H1 (cell line): ENCODE measurements at regions of chr16 and their contacts with region 1.

Region 1: DNA sequence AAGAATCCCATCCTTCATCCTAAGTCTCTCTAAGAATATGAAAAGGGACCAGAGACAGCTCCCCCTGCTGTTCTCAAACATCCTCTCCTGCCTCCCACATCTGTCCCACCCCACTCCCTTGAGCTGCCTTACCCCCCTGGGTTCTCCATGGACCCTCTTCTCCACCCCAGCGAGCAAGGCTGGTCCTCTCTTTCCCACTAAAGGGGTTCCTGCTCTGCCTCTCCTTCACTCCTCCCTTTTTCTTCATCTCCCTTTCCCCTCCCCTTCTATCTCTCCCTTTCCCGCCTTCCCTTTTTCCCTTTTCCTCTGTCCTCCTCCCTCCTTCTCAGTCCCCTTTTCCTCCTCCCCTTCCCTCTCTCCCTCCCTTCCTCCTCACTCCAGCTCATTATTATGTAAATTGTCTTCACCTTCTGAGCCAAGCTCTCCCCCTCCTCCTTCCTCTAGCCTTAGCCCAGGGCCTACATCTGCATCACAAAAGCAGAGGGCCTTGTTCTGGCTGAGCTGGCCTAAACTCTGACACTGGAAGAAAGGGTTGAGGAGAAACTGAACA is 90.0 kb downstream of the GNAO1 start:
- DNase-seq: peak; percentile 68 to 91
- H3K4me3 ChIP-seq: peak overlapping the region in 1 of 4 experiments; percentile 44; a peak in 3 of 8 replicates
- H3K27ac ChIP-seq: no peak overlapping the region
- H3K4me1 ChIP-seq: peaks cover 0 to 41% (median 32%) of the 10 kb centered on the region in 4 experiments; a peak in 6 of 7 replicates
- H3K27me3 ChIP-seq: no peaks in the 10 kb centered on the region
- CTCF ChIP-seq: peak in 2 of 3 experiments; percentile 34 to 64; a peak in 3 of 4 replicates
- EP300 ChIP-seq: peak in 1 of 2 experiments; percentile 83; a peak in 1 of 3 replicates
- POLR2A ChIP-seq: no peak
- RAD21 ChIP-seq: peak in 1 of 2 experiments; percentile 10; a peak in 2 of 4 replicates

Region 2: DNA sequence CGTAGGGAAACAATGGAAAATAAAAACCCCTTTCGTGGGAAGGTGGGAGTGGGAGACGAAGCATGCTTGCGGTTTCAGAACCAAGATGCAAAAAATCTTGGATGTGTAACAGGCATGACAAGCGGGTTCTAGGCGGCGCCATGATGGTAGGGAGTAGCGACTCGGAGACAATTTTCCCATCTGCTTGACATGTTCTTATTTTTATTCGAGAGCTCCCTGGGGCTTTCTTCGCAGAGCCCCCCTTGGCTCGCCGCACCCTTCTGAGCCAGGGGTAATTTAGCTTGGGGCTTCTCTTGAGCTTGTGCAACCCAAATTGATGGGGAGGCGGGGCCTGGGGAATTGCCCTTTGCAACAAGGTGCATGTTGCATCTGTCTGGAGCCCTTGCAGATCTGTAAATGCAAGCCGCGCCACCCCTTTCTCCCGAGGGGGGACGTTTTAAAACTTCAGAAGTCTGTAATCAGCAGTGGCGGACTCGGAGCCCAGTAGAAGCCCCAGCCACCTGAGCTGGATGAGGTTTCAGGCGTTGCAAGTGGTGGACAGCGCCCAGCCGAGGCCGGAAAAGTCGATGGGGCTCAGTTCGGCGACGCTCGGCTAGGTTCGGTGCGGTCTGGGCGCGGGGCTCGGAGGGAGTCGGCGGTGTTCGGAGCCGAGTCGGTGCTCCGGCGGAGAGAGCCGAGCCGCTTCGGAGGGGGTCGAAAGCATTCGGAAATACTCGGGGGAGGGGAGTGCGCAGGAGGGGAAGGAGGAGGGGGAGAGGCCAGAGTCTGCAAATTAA is 87.2 kb before region 1 on chr16:
- CTCF ChIA-PET with region 1: interaction called, 11 read pairs
- POLR2A ChIA-PET with region 1: no interaction called
- DNase-seq: peak; percentile 81 to 99
- H3K4me3 ChIP-seq: peak overlapping the region; percentile 28 to 85 (median 44); a peak in 7 of 8 replicates
- H3K27ac ChIP-seq: no peak overlapping the region
- H3K4me1 ChIP-seq: peaks cover 17 to 29% (median 23%) of the 10 kb centered on the region in 4 experiments
- H3K27me3 ChIP-seq: peaks cover 0 to 26% (median 16%) of the 10 kb centered on the region in 4 experiments; a peak in 6 of 7 replicates
- CTCF ChIP-seq: no peak
- EP300 ChIP-seq: peak in 1 of 2 experiments; percentile 24; a peak in 1 of 3 replicates
- POLR2A ChIP-seq: no peak
- RAD21 ChIP-seq: 0 out of 4 replicates have a peak, but pooled peaks of 1 of the 2 experiments have one; percentile 15

Region 3: GRCh38 chr16:56262148-56262547 is 19.2 kb before region 1 on chr16:
- CTCF ChIA-PET with region 1: interaction called, 70 read pairs
- POLR2A ChIA-PET with region 1: interaction called, 4 read pairs
- DNase-seq: no peak
- H3K4me3 ChIP-seq: no peak overlapping the region
- H3K27ac ChIP-seq: no peak overlapping the region
- H3K4me1 ChIP-seq: peaks cover 0 to 3% (median 0%) of the 10 kb centered on the region in 4 experiments; a peak in 3 of 7 replicates
- H3K27me3 ChIP-seq: no peaks in the 10 kb centered on the region
- CTCF ChIP-seq: no peak
- EP300 ChIP-seq: no peak
- POLR2A ChIP-seq: no peak
- RAD21 ChIP-seq: no peak

Region 4: GRCh38 chr16:56269811-56270684 is 11.3 kb before region 1 on chr16:
- CTCF ChIA-PET with region 1: interaction called, 70 read pairs
- POLR2A ChIA-PET with region 1: interaction called, 7 read pairs
- DNase-seq: peak in 1 of 2 experiments; percentile 29
- H3K4me3 ChIP-seq: no peak overlapping the region
- H3K27ac ChIP-seq: 0 out of 2 replicates have a peak overlapping the region, but pooled peaks have one; percentile 38
- H3K4me1 ChIP-seq: peaks cover 0 to 9% (median 3%) of the 10 kb centered on the region in 4 experiments; a peak in 4 of 7 replicates
- H3K27me3 ChIP-seq: no peaks in the 10 kb centered on the region
- CTCF ChIP-seq: peak; percentile 36 to 52 (median 41)
- EP300 ChIP-seq: no peak
- POLR2A ChIP-seq: no peak
- RAD21 ChIP-seq: peak; percentile 15 to 38; a peak in 3 of 4 replicates

Region 5: DNA sequence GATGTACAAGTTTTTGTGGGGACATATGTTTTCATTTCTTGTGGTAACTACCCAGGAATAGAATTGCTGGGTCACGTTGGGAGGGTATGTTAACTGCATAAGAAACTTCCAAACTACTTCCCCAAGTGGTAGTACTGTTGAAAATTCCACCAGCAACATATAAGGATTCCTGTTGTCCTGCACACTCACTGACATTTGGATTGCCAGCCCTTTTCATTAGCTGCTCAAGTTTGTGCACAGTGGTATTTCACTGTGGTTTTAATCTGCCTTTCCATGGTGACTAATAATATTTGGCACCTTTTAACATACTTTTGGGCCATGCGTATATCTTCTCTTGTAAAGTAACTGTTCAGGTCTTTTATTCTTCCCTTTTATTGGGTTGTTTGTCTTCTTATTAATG is 13.2 kb after region 1 on chr16:
- CTCF ChIA-PET with region 1: interaction called, 15 read pairs
- POLR2A ChIA-PET with region 1: interaction called, 7 read pairs
- DNase-seq: no peak
- H3K4me3 ChIP-seq: no peak overlapping the region
- H3K27ac ChIP-seq: no peak overlapping the region
- H3K4me1 ChIP-seq: peaks cover 11 to 17% (median 12%) of the 10 kb centered on the region in 4 experiments; a peak in 6 of 7 replicates
- H3K27me3 ChIP-seq: peaks cover 0 to 2% (median 0%) of the 10 kb centered on the region in 4 experiments; a peak in 2 of 7 replicates
- CTCF ChIP-seq: no peak
- EP300 ChIP-seq: no peak
- POLR2A ChIP-seq: no peak
- RAD21 ChIP-seq: no peak

Region 6: GRCh38 chr16:56300891-56301850 is 19.8 kb after region 1 on chr16:
- CTCF ChIA-PET with region 1: interaction called, 10 read pairs
- POLR2A ChIA-PET with region 1: interaction called, 7 read pairs
- DNase-seq: no peak
- H3K4me3 ChIP-seq: no peak overlapping the region
- H3K27ac ChIP-seq: no peak overlapping the region
- H3K4me1 ChIP-seq: peaks cover 8 to 11% (median 10%) of the 10 kb centered on the region in 4 experiments; a peak in 6 of 7 replicates
- H3K27me3 ChIP-seq: peaks cover 0 to 2% (median 0%) of the 10 kb centered on the region in 4 experiments; a peak in 1 of 7 replicates
- CTCF ChIP-seq: no peak
- EP300 ChIP-seq: no peak
- POLR2A ChIP-seq: no peak
- RAD21 ChIP-seq: no peak

Region 7: DNA sequence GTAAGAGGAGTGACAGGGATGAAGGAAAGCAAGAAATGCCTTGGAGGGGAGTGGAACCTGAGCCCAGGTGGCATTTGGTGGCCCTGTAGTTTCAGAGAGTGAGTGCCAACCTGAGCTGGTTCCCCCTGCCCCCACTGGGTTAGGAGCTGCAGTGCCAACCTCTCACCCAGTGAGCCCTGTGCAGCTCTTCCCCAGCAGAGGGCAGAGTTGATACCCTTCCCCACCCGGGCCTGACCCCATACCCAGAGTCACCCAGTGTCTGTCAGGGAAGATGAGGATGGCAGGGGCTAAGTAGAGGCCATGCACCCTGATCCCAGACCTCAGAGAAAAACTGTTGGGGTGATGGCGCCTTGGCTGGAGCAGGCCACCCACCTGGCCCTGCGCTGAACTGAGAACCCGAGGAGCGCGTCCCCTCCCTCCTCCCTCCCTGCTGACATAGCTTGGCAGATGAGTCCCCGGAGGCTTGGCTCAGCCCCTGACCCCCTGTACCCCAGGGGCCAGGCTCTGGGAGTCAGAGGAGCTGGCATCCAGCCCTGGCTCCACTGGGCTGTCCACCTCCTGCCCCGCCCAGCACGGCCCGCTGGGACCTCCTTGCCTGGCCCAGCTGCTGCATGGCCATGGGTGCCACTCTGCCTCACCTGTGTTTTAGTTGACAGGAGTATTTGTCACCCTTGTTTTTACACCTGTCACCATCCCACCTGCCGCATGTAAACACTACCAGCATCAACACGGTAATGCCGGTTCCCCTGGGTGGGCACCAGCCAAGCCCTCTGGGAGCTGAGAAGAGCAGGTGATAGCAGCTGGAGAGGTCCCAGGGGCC is 30.1 kb after region 1 on chr16:
- CTCF ChIA-PET with region 1: interaction called, 26 read pairs
- POLR2A ChIA-PET with region 1: interaction called, 5 read pairs
- DNase-seq: no peak
- H3K4me3 ChIP-seq: no peak overlapping the region
- H3K27ac ChIP-seq: no peak overlapping the region
- H3K4me1 ChIP-seq: peaks cover 0 to under 1% (median 0%) of the 10 kb centered on the region in 4 experiments; a peak in 2 of 7 replicates
- H3K27me3 ChIP-seq: no peaks in the 10 kb centered on the region
- CTCF ChIP-seq: peak; percentile 65 to 83 (median 77)
- EP300 ChIP-seq: no peak
- POLR2A ChIP-seq: no peak
- RAD21 ChIP-seq: peak; percentile 44 to 60

Region 8: DNA sequence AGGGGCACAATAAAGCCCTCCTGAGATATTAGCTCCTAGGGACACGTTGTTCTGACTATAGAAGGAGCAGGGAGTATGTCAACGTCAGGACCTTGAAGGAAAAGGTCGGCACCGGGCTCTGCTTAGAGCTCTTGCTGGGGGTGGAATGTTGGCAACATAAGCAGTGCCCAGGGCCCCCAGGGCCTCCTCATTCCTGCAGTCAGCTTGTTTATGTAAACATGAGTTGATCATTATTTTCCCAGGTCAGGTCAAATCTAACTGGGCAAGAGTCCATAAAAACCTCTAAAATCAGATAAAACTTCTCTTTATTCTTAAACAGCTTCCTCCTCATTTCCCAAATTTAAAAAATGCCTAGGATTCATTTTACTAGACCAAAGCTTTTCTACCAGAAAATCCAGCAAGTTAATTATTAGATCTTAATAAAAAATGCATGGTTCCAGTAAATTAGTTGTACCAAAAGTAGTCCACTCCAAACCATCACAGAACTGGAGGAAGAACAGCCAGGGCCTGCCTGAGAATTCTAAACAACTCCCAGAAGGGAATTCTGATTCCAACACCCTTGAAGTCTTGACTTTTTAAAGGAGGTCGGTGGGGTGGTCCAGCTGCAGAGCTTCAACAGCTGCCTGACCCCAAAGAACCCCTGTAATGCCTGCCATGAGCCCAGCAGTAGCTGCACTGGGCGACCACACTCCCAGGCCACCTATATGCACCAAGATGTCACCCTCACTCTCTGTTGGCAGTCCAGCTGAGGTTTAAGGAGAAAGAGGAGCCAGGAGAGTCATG is 89.7 kb after region 1 on chr16:
- CTCF ChIA-PET with region 1: no interaction called
- POLR2A ChIA-PET with region 1: no interaction called
- DNase-seq: no peak
- H3K4me3 ChIP-seq: no peak overlapping the region
- H3K27ac ChIP-seq: no peak overlapping the region
- H3K4me1 ChIP-seq: no peaks in the 10 kb centered on the region
- H3K27me3 ChIP-seq: no peaks in the 10 kb centered on the region
- CTCF ChIP-seq: no peak
- EP300 ChIP-seq: no peak
- POLR2A ChIP-seq: no peak
- RAD21 ChIP-seq: no peak